HCT116 (cell line): ENCODE measurements at regions of chr13 and their contacts with region 1.

Region 1: DNA sequence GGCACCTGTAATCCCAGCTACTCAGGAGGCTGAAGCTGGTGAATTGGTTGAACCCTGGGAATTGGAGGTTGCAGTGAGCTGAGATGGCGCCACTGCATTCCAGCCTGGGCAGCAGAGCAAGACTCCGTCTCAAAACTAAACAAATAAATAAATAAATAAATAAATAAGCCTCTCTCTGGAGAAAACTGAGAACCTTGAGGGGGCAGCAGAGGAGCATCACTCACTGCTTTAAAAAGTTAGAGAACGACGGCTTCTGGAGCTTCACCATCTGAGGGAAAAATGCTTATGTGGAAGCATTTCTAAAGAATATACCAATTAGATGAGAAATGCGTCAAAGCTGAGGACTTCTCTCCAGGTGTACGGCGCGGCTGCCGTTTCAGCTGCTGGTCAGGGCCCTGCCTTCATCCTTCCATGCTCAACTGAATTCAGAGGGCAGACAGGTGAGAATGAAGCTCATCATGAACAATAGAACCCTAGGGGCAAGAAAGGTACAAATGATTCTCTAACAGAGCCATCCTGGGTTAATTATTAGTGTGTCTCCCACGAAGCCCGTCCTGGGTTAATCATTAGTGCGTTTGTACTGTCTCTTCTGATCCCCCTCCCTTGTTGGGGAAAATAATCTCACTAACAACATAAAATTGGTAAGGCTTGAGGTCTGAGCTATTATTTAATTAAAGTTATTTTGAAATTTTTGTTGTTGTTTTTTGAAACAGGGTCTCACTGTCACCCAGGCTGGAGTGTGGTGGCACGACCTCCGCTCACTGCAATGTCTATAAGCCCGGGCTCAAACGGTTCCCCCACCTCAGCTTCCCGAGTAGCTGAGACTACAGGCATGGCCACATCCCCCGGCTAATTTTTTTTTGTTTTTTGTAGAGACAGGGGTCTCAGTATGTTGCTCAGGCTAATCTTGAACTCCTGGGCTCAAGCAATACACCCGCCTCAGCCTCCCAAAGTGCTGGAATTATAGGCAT is 80.1 kb downstream of the IPO5 start:
- DNase-seq: peak; percentile 16
- ATAC-seq: peak; percentile 83
- H3K4me3 ChIP-seq: no peak overlapping the region
- H3K27ac ChIP-seq: no peak overlapping the region
- H3K4me1 ChIP-seq: no peaks in the 10 kb centered on the region
- H3K27me3 ChIP-seq: no peaks in the 10 kb centered on the region
- CTCF ChIP-seq: peak; percentile 38 to 76 (median 39); a peak in 5 of 6 replicates
- POLR2A ChIP-seq: no peak
- RAD21 ChIP-seq: peak; percentile 74

Region 2: DNA sequence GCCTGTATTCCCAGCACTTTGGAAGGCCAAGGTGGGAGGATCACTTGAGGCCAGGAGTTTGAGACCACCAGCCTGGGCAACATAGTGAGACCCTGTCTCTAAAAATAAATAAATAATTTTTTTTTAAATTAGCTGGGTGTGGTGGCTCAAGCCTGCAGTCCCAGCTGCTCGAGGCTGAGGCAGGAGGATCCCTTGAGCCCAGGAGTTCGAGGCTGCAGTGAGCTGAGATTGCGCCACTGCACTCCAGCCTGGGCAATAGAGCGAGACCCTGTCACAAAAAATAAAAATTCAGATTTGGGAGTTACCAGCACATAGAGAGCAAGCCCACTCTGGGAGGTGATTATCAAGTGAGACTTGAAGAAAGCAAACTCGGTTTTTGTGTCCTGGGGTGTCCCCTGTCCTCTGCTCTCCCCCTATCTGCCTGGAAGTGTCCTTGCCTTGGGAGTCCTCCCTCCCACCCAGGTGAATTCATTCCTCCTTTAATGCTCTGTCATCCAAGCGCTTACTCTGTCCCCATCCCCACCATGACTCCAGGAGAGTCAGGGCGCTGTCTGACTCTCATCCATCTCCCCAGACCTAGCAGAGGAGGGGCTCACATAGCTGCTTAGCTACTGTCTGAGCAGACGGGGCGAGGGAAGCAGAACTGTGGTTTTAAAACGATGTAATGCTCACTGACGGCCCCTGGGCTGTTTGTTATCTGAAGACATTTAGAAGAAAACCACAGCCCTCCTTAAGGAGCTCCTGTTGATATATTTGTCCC is 396.6 kb after region 1 on chr13:
- CTCF ChIA-PET with region 1: interaction called, 8 read pairs
- POLR2A ChIA-PET with region 1: no interaction called
- RAD21 ChIA-PET with region 1: no interaction called
- intact Hi-C with region 1: loop called (anchors 2 kb)
- DNase-seq: no peak
- ATAC-seq: no peak
- H3K4me3 ChIP-seq: no peak overlapping the region
- H3K27ac ChIP-seq: no peak overlapping the region
- H3K4me1 ChIP-seq: peaks cover 0 to 4% of the 10 kb centered on the region in 2 experiments; a peak in 1 of 4 replicates
- H3K27me3 ChIP-seq: no peaks in the 10 kb centered on the region
- CTCF ChIP-seq: no peak
- POLR2A ChIP-seq: no peak
- RAD21 ChIP-seq: no peak

Region 3: GRCh38 chr13:98445340-98446233 is 412.0 kb after region 1 on chr13:
- CTCF ChIA-PET with region 1: interaction called, 11 read pairs
- POLR2A ChIA-PET with region 1: no interaction called
- RAD21 ChIA-PET with region 1: no interaction called
- intact Hi-C with region 1: no loop called
- DNase-seq: peak; percentile 41
- ATAC-seq: peak; percentile 87
- H3K4me3 ChIP-seq: no peak overlapping the region
- H3K27ac ChIP-seq: no peak overlapping the region; the same call in 1 of the 2 replicates
- H3K4me1 ChIP-seq: peaks cover 0 to 35% of the 10 kb centered on the region in 2 experiments; a peak in 2 of 4 replicates
- H3K27me3 ChIP-seq: no peaks in the 10 kb centered on the region
- CTCF ChIP-seq: peak in 2 of 3 experiments; percentile 89 to 97; a peak in 4 of 6 replicates
- POLR2A ChIP-seq: no peak
- RAD21 ChIP-seq: no peak